Activated CD4-positive, alpha-beta memory T cell treated with anti-CD3 and anti-CD28 coated beads, Interleukin-2, amount 10 ng/mL, durations not matched to agents 7 days and 5 days (primary cell): ENCODE measurements at regions of chr1 and their contacts with region 1.

Region 1: DNA sequence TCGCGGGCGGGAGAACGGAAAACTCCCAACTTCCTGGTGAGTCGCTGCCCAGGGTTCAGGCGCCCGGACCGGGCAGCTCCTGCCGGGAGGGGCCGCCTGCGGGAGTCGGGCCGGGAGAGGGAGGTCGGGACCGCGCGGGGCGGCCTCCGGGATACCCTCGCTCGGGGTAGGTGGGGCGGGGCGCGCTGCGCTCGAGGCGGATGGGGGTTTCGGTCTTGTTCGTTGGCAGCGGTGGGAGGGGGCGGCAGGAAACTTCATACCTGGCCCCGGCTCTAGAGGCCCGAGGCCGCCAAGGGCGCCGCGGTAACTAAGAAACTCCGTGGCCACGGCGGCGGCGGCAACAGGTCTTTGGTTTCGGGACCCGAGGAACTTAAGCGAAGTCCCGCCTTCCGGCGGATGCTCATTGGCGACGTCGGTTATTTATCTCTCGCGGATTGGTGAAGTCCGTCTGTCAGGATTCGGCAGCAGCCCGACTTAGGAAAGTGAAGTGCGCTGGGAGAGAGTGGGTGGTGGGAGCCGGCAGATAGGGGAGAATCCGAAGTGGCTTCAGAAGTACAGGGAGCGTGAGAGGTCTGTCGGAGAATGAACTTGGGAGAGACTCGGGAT is 546 bp downstream of the NEK7 start:
- DNase-seq: peak; percentile 85
- H3K4me3 Mint-ChIP-seq: peak overlapping the region; percentile 96
- H3K27ac Mint-ChIP-seq: peak overlapping the region; percentile 94
- H3K4me1 Mint-ChIP-seq: peaks cover 31% of the 10 kb centered on the region
- H3K27me3 Mint-ChIP-seq: no peaks in the 10 kb centered on the region

Region 2: DNA sequence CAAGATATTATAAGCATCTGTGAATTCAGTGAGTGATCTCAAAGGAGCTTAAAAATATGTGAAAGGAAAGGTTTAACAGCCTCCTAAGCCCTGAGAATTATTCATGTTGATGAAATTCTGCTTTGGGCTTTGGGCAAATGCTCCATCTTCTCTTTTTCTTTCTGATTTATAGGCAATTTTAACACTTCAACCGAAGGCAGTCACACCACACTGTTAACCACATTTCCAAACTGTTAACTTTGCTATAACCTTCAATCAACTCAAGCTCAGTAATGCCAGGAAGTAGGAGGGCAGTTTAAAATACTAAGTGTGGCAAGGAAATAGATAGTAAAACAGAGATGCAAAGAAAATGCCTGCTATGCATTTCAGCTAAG is 54.9 kb before region 1 on chr1:
- CTCF ChIA-PET with region 1: interaction called, 3 read pairs
- POLR2A ChIA-PET with region 1: interaction called, 11 read pairs
- DNase-seq: no peak
- H3K4me3 Mint-ChIP-seq: no peak overlapping the region
- H3K27ac Mint-ChIP-seq: peak overlapping the region; percentile 74
- H3K4me1 Mint-ChIP-seq: peaks cover 17% of the 10 kb centered on the region
- H3K27me3 Mint-ChIP-seq: peaks cover 3% of the 10 kb centered on the region

Region 3: DNA sequence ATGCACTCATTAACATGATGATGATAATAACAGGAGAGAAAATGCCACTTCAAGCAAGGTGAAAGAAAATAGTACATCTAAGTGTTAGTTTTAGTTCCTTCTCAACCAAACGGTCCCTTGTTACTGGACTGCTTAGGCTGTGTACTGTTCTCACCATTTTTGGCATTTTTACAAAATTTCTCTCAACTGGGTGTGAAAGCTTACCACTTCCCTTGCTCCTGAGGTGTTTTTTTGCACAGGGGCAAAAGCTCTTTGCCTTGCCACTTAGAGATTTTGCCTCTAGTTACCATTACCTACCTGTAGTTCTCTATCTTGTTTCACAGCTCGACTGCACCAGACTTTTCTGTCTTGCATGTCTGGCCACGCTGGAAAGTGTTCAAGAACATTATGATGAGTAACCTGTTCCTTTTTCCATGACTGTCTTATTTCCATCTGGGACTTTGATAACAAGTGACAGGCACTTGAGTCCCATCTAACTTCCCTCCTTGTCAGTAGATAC is 10.1 kb after region 1 on chr1:
- CTCF ChIA-PET with region 1: interaction called, 12 read pairs
- POLR2A ChIA-PET with region 1: interaction called, 59 read pairs
- DNase-seq: peak; percentile 32
- H3K4me3 Mint-ChIP-seq: peak overlapping the region; percentile 50
- H3K27ac Mint-ChIP-seq: peak overlapping the region; percentile 79
- H3K4me1 Mint-ChIP-seq: peaks cover 78% of the 10 kb centered on the region
- H3K27me3 Mint-ChIP-seq: no peaks in the 10 kb centered on the region

Region 4: GRCh38 chr1:198175423-198176170 is 18.3 kb after region 1 on chr1:
- CTCF ChIA-PET with region 1: interaction called, 12 read pairs
- POLR2A ChIA-PET with region 1: interaction called, 59 read pairs
- DNase-seq: no peak
- H3K4me3 Mint-ChIP-seq: no peak overlapping the region
- H3K27ac Mint-ChIP-seq: peak overlapping the region; percentile 36
- H3K4me1 Mint-ChIP-seq: peaks cover 78% of the 10 kb centered on the region
- H3K27me3 Mint-ChIP-seq: no peaks in the 10 kb centered on the region

Region 5: DNA sequence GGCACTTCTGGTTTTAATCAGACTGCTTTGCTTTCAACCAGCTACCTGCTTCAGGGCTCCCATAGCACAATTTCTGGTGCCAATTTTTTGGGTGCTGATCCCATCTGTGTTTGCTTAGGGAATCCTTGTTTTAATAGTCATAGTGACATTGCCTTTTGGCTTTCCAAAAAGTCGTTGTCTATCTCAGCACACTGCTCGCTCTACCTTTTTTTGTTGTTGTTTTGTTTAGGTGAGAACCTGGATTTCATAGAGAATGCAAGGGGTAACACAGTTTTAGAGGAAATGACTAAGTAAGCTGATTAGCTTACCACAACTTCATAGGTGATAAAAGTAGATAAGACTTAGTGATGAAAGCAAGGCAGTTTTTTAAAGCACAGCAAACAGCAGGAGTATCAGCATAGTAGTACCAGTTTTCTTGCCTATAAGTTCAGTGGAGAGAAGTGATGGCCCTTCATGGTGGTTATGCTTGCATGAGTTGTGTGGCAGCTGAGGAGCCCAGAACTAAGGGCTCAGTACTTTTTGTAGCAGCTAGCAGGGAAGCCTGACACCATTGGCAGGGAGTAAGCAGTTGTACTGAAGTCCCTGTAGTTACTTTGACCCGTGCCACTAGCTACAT is 30.7 kb after region 1 on chr1:
- CTCF ChIA-PET with region 1: interaction called, 4 read pairs
- POLR2A ChIA-PET with region 1: interaction called, 22 read pairs
- DNase-seq: peak; percentile 36
- H3K4me3 Mint-ChIP-seq: peak overlapping the region; percentile 46
- H3K27ac Mint-ChIP-seq: peak overlapping the region; percentile 78
- H3K4me1 Mint-ChIP-seq: peaks cover 78% of the 10 kb centered on the region
- H3K27me3 Mint-ChIP-seq: no peaks in the 10 kb centered on the region